ENCODE measurements at regions of chr15 and their contacts with region 1.

Region 1: GRCh38 chr15:42059661-42060476 is 34.5 kb downstream of the PLA2G4D start:
- DNase-seq: no peak
- ATAC-seq: peak in 1 of 2 donors; percentile 41
- H3K4me3 ChIP-seq: no peak overlapping the region
- H3K27ac ChIP-seq: no peak overlapping the region
- H3K4me1 ChIP-seq: peaks cover 22% of the 10 kb centered on the region
- H3K27me3 ChIP-seq: no peaks in the 10 kb centered on the region
- CTCF ChIP-seq: peak; percentile 92

Region 2: GRCh38 chr15:41989259-41989933 is 70.5 kb before region 1 on chr15:
- intact Hi-C with region 1: loop called (anchors 10 kb)
- DNase-seq: peak; percentile 87
- ATAC-seq: peak; percentile 90 to 91
- H3K4me3 ChIP-seq: no peak overlapping the region
- H3K27ac ChIP-seq: no peak overlapping the region
- H3K4me1 ChIP-seq: no peaks in the 10 kb centered on the region
- H3K27me3 ChIP-seq: no peaks in the 10 kb centered on the region
- CTCF ChIP-seq: peak; percentile 100

Region 3: DNA sequence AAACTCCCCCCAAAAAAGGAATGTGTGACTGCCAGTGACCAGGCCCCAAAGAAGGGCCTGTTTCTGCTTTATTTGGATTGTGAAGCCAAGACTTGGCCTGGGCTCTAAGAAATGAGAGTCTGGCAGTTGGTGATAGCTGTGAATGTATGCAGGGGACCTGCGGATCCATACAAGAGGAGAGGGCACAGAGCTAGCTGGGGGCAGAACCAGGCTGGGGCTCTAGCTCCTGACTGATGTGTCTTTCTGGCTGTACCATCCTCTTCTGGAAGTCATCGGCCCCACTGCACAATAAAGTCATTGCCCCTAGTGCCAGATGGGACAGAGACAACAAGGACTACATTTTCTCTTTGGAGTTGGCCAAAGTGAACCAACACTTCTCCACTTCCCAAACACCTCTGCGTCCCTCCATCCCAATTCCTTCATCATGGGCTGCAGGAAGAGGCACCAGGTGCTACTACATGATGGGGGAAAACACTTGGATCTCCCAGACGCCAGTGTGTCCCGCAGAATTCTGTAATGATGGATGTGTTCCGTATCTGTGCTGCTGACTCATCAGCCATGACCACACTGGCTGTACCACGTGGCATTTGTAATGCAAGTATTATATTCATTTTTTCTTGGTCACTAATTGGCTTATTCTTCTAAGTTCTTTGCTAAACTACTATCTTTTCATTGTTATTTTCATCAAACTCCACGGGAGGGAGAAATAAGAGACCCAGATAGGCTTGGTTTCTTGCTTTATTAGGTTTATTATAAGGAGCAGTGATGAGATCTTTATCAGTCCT is 98.3 kb after region 1 on chr15:
- intact Hi-C with region 1: no loop called
- DNase-seq: no peak
- ATAC-seq: no peak
- H3K4me3 ChIP-seq: no peak overlapping the region
- H3K27ac ChIP-seq: no peak overlapping the region
- H3K4me1 ChIP-seq: peaks cover 10% of the 10 kb centered on the region
- H3K27me3 ChIP-seq: no peaks in the 10 kb centered on the region
- CTCF ChIP-seq: no peak

Measured in lower lobe of right lung (tissue), 2 donors.